GM23248 (cell line): ENCODE measurements at regions of chr2 and their contacts with region 1.

Region 1: GRCh38 chr2:228681426-228681825 is 499.9 kb upstream of the SPHKAP start:
- DNase-seq: peak; percentile 75
- H3K4me3 ChIP-seq: no peak overlapping the region
- H3K27ac ChIP-seq: no peak overlapping the region
- H3K4me1 ChIP-seq: no peaks in the 10 kb centered on the region
- H3K27me3 ChIP-seq: no peaks in the 10 kb centered on the region

Region 2: DNA sequence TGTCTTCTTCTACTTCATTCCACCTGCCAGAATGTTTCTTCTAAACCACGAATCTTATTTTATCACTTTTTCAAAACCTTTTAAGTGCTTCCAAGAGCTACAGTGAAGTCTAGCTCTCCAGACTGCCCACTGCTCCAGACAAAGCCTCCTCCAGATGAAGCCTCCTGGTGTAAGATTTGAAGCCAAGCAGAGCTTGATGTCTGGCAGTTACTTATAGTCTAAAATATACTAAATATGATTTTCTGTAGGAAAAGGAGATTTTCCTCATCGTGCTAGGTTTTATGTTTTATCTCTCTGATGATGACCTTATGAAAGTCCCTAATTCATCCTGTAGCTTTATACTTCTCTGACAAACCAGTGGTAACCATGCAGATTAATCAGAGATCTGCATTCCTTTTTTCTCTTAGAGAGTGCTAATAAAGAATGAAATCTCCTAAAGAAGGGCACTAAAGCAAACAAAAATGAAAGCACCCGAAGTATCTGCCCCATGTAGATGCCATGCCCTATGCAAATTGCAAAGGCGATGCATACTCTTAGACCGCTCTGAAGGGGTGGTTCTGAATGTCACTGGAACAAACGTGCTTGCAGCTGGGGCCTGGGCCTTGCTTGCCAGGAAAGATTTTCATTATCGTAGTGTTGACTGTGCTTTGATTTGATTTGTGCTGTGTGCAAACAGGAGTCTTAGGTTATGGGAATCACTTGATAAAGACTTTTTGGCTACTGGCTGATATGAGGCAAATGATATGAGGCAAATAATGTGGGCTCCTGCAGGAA is 275.5 kb after region 1 on chr2:
- in situ Hi-C with region 1: no loop called
- DNase-seq: no peak
- H3K4me3 ChIP-seq: no peak overlapping the region
- H3K27ac ChIP-seq: no peak overlapping the region
- H3K4me1 ChIP-seq: no peaks in the 10 kb centered on the region
- H3K27me3 ChIP-seq: no peaks in the 10 kb centered on the region

Region 3: DNA sequence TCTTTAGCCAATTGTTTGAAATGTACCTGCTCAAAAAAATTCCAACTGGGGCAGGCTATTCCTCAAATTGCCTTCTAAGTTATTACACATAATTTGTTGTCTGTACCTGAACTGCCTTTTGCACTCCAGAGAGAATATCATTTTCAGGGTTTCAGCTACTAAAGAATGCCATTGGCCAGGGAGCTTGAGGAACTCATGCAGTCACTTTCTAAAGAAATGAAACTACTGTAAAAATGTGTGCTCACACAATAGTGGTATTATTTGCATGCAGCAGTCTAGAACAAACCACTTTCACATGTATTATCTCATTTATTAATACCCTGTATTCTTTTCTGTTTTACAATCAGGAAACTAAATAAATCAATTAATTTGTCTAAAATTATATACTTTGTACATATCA is 437.5 kb after region 1 on chr2:
- in situ Hi-C with region 1: loop called (anchors 25 kb)
- DNase-seq: no peak
- H3K4me3 ChIP-seq: no peak overlapping the region
- H3K27ac ChIP-seq: no peak overlapping the region
- H3K4me1 ChIP-seq: no peaks in the 10 kb centered on the region
- H3K27me3 ChIP-seq: no peaks in the 10 kb centered on the region

Region 4: GRCh38 chr2:229282758-229283546 is 601.5 kb after region 1 on chr2:
- in situ Hi-C with region 1: loop called (anchors 25 kb)
- DNase-seq: peak; percentile 98
- H3K4me3 ChIP-seq: no peak overlapping the region
- H3K27ac ChIP-seq: peak overlapping the region; percentile 35; the same call in 1 of the 2 replicates
- H3K4me1 ChIP-seq: peaks cover 11% of the 10 kb centered on the region
- H3K27me3 ChIP-seq: no peaks in the 10 kb centered on the region

Region 5: GRCh38 chr2:229431327-229431954 is 750.0 kb after region 1 on chr2:
- in situ Hi-C with region 1: loop called (anchors 25 kb)
- DNase-seq: peak; percentile 72
- H3K4me3 ChIP-seq: no peak overlapping the region
- H3K27ac ChIP-seq: no peak overlapping the region
- H3K4me1 ChIP-seq: no peaks in the 10 kb centered on the region
- H3K27me3 ChIP-seq: no peaks in the 10 kb centered on the region

Region 6: GRCh38 chr2:229586746-229587705 is 905.6 kb after region 1 on chr2:
- in situ Hi-C with region 1: loop called (anchors 25 kb)
- DNase-seq: peak; percentile 88
- H3K4me3 ChIP-seq: peak overlapping the region; percentile 65
- H3K27ac ChIP-seq: no peak overlapping the region
- H3K4me1 ChIP-seq: peaks cover 6% of the 10 kb centered on the region; the same call in 1 of the 2 replicates
- H3K27me3 ChIP-seq: no peaks in the 10 kb centered on the region; the same call in 1 of the 2 replicates